GM10248 (cell line): ENCODE measurements at regions of chr4 and their contacts with region 1.

Region 1: DNA sequence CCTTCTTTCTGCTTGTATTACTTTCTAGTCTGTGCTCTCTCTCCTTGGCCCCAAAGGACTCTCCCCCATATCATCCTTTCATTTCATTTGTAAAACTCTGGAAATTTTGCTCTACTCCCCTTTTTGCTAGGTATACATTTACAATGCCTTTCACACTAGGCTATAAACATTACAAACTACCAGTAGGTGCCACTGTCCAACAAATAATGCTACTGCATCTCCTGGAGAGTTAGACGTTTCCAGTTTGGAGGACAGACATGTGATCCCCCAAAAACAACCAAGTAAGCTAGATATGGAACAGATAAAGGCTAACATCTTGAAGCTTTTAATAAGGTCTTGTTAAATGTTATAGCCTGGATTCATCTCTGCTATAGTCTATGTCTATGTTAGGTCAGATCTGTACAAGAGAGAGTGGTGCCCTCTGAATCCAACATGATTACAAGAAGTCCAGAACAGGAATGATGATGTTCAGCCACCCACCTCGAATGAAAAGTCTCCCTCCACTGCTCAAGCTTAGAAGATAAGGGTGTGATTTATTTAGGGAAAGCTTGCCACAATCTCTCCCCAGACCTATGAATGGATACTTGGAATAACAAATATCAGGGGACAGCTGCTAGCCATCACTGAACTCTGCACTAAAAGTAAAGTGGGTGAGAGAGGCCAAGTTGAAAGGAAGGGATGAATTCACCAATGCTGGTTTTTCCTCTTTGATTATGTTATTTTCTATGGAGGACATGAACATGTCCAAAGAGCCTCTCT is 14.3 kb downstream of the CBR4 start:
- DNase-seq: no peak
- CTCF ChIP-seq: no peak

Region 2: GRCh38 chr4:169010125-169011023 is 14.7 kb after region 1 on chr4 and contains the start of gene CBR4:
- CTCF ChIA-PET with region 1: interaction called, 13 read pairs
- POLR2A ChIA-PET with region 1: no interaction called
- DNase-seq: peak; percentile 91
- CTCF ChIP-seq: peak; percentile 3

Region 3: DNA sequence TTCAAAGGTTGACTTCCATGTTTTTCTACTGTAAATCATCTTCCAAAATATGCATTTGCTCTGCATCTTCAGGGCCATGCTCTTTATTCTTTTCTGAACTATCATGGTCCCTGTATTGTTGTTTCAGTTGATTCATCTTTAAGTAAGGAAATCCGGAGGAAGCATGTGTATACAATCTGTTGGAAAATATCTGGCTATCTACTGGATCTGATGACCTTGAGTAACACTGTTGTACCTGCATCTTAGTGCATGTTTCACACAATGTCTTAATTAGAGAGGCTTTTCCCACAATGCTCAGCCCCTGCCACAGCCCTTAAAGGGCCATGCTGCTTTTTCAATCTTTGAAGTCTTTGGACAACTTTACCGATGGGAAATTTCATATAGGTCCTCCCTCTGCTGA is 336.9 kb after region 1 on chr4:
- CTCF ChIA-PET with region 1: no interaction called
- POLR2A ChIA-PET with region 1: no interaction called
- DNase-seq: no peak
- CTCF ChIP-seq: no peak